CD4-positive, alpha-beta T cell (primary cell): ENCODE measurements at regions of chr1 and their contacts with region 1.

Region 1: DNA sequence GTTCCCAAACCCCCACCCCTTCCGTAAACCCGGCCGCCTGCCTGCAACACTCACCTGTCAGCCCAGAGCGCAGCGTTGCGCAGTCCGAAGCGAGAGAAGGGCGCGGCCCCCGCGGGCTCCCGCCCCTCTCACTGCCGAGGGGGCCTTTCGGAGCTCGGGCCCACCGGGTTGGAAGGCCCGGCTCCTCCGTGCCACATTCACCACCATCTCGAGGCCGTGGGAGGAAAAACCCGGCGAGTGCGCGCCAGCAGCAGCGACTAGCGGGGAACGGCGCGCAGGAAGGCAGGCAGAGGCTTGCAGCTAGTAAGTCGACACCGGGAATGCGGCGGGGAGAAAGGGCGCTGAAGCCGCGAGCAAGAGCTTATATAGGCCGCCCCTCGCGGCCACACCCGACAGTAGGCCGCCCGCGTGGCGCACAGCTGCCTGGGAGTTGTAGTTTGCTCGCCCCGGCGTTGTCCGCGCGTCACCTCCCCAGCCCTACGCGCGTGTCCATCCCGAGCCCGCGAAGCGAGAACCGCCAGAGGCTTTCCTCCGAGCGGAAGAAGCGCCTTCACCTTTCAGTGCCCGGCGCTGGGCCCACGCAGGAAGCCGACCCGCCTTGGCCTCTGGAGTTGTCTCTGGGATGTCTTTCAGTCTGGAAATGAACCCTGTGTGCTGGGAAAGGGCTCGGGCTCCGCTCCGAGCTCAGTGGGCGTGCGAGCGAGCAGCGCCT is 10.4 kb upstream of the RAB42 start:
- DNase-seq: peak; percentile 85 to 97 (median 92)
- ATAC-seq: peak; percentile 83
- H3K4me3 ChIP-seq: peak overlapping the region; percentile 93
- H3K4me3 Mint-ChIP-seq: peak overlapping the region; percentile 94
- H3K27ac ChIP-seq: peak overlapping the region; percentile 70 to 83
- H3K27ac Mint-ChIP-seq: peak overlapping the region; percentile 81
- H3K4me1 ChIP-seq: peaks cover 39% of the 10 kb centered on the region
- H3K4me1 Mint-ChIP-seq: peaks cover 48% of the 10 kb centered on the region
- H3K27me3 ChIP-seq: no peaks in the 10 kb centered on the region
- H3K27me3 Mint-ChIP-seq: no peaks in the 10 kb centered on the region
- CTCF ChIP-seq: no peak

Region 2: GRCh38 chr1:28518000-28518744 is 63.5 kb before region 1 on chr1:
- CTCF ChIA-PET with region 1: interaction called, 12 read pairs
- POLR2A ChIA-PET with region 1: interaction called, 22 read pairs
- intact Hi-C with region 1: loop called in 1 of 2 experiments (anchors 2 kb)
- DNase-seq: peak; percentile 80 to 93 (median 86)
- ATAC-seq: peak; percentile 90
- H3K4me3 ChIP-seq: peak overlapping the region; percentile 66
- H3K4me3 Mint-ChIP-seq: peak overlapping the region; percentile 91
- H3K27ac ChIP-seq: peak overlapping the region; percentile 23 to 29
- H3K27ac Mint-ChIP-seq: peak overlapping the region; percentile 83
- H3K4me1 ChIP-seq: peaks cover 24% of the 10 kb centered on the region
- H3K4me1 Mint-ChIP-seq: peaks cover 33% of the 10 kb centered on the region
- H3K27me3 ChIP-seq: no peaks in the 10 kb centered on the region
- H3K27me3 Mint-ChIP-seq: no peaks in the 10 kb centered on the region
- CTCF ChIP-seq: peak; percentile 94

Region 3: DNA sequence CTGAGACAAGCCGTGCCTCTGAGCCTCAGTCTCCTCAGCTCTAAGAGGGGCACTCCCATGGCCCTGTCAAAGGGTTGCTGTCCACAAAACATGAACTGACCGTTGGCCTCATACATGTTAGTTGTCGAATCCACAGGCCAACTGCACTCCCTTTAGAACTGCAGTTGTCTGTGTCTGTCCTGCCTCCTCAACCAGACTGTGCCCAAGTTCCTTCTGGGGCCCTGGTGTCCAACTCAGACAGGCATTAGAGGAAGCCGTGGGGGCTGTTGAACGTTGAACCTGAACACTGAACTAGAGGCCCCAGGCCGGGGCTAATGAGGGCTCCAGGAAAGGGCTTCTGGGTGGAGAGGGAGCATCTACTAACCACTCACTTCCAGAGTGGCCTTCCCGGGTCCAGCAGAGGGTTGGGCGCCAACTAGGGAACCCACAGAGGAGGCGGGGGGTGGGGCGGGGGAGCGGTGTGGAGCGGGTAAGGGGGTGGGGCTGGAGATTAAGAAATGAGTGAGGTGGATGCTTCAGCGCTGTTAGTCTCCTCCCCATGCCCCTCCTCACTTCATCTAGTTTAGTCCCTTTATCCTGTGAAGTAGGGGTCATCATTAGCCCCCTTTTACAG is 10.1 kb after region 1 on chr1 and contains the start of gene RAB42:
- CTCF ChIA-PET with region 1: interaction called, 5 read pairs
- POLR2A ChIA-PET with region 1: interaction called, 26 read pairs
- intact Hi-C with region 1: no loop called
- DNase-seq: peak in 4 of 14 experiments; percentile 11 to 47 (median 32)
- ATAC-seq: peak; percentile 75
- H3K4me3 ChIP-seq: peak within 1 kb of the TSS; percentile 40
- H3K4me3 Mint-ChIP-seq: peak within 1 kb of the TSS; percentile 86
- H3K27ac ChIP-seq: no peak within 1 kb of the TSS
- H3K27ac Mint-ChIP-seq: no peak within 1 kb of the TSS
- H3K4me1 ChIP-seq: peaks cover 9% of the 10 kb centered on the region
- H3K4me1 Mint-ChIP-seq: peaks cover 7% of the 10 kb centered on the region
- H3K27me3 ChIP-seq: peaks cover 0 to 6% of the 10 kb centered on the region in 2 experiments
- H3K27me3 Mint-ChIP-seq: peaks cover 12% of the 10 kb centered on the region
- CTCF ChIP-seq: no peak
- total RNA-seq, gene RAB42: not detected

Region 4: DNA sequence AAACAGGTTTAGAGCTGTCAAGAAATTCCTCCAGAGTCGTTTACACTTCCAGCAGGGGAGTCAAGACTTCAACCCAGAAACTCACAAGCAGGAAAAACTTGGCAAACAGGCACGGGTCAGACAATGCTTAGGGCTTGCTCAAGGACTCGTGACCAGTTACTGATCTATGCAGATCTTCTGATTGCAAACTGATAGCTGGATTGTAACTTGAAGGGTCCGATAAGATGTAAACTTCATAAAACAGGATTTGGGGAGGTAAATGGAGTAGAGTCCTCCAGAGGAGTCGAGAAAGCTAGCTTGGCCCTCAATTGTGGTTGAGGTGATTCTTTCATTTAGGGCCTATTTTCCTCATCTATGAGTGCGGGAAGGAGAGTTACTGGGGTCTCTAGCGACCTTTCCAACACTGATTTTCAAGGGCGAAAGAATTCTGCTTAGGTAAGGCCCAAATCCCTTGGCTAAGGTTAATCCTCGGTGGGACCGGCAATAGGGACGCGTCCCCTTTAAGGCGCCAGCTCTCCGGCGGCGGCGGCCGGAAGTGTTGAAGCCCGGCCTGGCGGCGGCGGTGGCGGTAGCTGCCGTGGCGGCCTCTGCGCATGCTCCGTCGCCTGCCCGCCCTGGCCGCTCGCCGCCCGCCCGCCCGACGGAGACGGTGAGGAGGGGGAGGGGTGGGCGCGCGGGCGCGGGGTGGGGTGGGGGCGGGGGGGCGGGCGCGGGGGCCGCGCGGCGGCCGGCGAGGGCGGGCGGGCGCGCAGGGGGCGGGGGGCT is 86.7 kb after region 1 on chr1 and contains the start of gene GMEB1:
- CTCF ChIA-PET with region 1: no interaction called
- POLR2A ChIA-PET with region 1: interaction called, 52 read pairs
- intact Hi-C with region 1: loop called in 1 of 2 experiments (anchors 1 kb)
- DNase-seq: peak; percentile 67 to 93 (median 82)
- ATAC-seq: peak; percentile 60
- H3K4me3 ChIP-seq: peak within 1 kb of the TSS; percentile 99
- H3K4me3 Mint-ChIP-seq: peak within 1 kb of the TSS; percentile 100
- H3K27ac ChIP-seq: peak within 1 kb of the TSS; percentile 96 to 97
- H3K27ac Mint-ChIP-seq: peak within 1 kb of the TSS; percentile 100
- H3K4me1 ChIP-seq: peaks cover 35% of the 10 kb centered on the region
- H3K4me1 Mint-ChIP-seq: peaks cover 24% of the 10 kb centered on the region
- H3K27me3 ChIP-seq: no peaks in the 10 kb centered on the region
- H3K27me3 Mint-ChIP-seq: no peaks in the 10 kb centered on the region
- CTCF ChIP-seq: no peak
- total RNA-seq, gene GMEB1: 9.0 to 11.8 TPM

Region 5: GRCh38 chr1:28703629-28704028 is 121.9 kb after region 1 on chr1:
- CTCF ChIA-PET with region 1: no interaction called
- POLR2A ChIA-PET with region 1: no interaction called
- intact Hi-C with region 1: no loop called
- DNase-seq: no peak
- ATAC-seq: no peak
- H3K4me3 ChIP-seq: no peak overlapping the region
- H3K4me3 Mint-ChIP-seq: no peak overlapping the region
- H3K27ac ChIP-seq: no peak overlapping the region
- H3K27ac Mint-ChIP-seq: no peak overlapping the region
- H3K4me1 ChIP-seq: no peaks in the 10 kb centered on the region
- H3K4me1 Mint-ChIP-seq: no peaks in the 10 kb centered on the region
- H3K27me3 ChIP-seq: no peaks in the 10 kb centered on the region
- H3K27me3 Mint-ChIP-seq: no peaks in the 10 kb centered on the region
- CTCF ChIP-seq: no peak

Region 6: GRCh38 chr1:28860332-28861073 is 278.8 kb after region 1 on chr1:
- CTCF ChIA-PET with region 1: no interaction called
- POLR2A ChIA-PET with region 1: no interaction called
- intact Hi-C with region 1: no loop called
- DNase-seq: no peak
- ATAC-seq: no peak
- H3K4me3 ChIP-seq: no peak overlapping the region
- H3K4me3 Mint-ChIP-seq: no peak overlapping the region
- H3K27ac ChIP-seq: no peak overlapping the region
- H3K27ac Mint-ChIP-seq: no peak overlapping the region
- H3K4me1 ChIP-seq: no peaks in the 10 kb centered on the region
- H3K4me1 Mint-ChIP-seq: no peaks in the 10 kb centered on the region
- H3K27me3 ChIP-seq: no peaks in the 10 kb centered on the region
- H3K27me3 Mint-ChIP-seq: peaks cover 4% of the 10 kb centered on the region
- CTCF ChIP-seq: no peak